Aorta (tissue), 5 donors: ENCODE measurements at regions of chr18 and their contacts with region 1.

Region 1: DNA sequence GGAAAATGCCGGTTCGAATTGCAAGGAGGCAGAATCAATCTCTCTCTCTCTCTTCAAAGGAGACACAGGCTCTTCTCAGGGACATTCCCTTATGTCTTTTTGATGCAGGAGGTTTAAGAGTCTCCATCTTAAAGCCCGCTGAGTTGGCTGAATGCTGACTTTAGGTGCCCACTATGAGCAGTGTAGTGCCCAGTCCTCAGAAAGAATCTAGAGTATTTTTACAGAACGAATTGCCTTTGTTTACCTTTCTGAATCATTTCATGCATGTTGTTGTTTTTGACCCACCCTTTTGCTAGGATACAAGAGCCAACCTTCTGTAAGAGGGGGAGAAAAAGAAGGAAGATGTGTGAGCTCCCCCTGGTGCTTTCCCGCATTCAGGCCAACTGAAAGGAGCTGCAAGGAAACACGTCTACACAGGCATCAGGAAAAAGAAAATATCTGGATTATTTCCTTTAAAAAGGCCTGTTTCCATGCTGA is 193.5 kb upstream of the TCF4 start:
- DNase-seq: peak in 1 of 2 donors; percentile 54
- ATAC-seq: peak; percentile 60
- H3K4me3 ChIP-seq: no peak overlapping the region
- H3K27ac ChIP-seq: no peak overlapping the region
- H3K4me1 ChIP-seq: peaks cover 0 to 2% of the 10 kb centered on the region in 2 donors
- H3K27me3 ChIP-seq: no peaks in the 10 kb centered on the region

Region 2: GRCh38 chr18:55415258-55415871 is 366.2 kb before region 1 on chr18:
- intact Hi-C with region 1: loop called (anchors 5 kb)
- DNase-seq: peak; percentile 90 to 97
- ATAC-seq: peak; percentile 91
- H3K4me3 ChIP-seq: no peak overlapping the region
- H3K27ac ChIP-seq: no peak overlapping the region
- H3K4me1 ChIP-seq: no peaks in the 10 kb centered on the region
- H3K27me3 ChIP-seq: no peaks in the 10 kb centered on the region

Region 3: DNA sequence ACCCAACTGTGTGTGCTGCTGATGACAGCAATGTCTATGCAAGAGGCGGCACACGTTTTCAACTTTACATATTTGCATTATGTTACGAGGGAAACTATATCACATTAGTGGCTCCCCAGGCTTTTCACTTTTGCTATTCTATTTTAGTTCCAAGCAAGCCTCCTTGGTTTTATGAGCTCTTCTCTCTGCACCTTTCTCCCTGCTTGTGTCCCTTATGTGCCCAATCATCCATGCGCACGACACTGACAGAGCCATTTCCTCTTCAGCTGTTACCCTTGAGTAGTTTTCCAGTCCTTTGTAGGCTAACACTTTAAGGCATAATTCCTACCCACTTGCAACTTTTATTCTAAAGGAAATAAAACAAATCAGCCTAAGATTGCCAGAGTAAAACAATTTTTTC is 347.9 kb before region 1 on chr18:
- intact Hi-C with region 1: no loop called
- DNase-seq: no peak
- ATAC-seq: no peak
- H3K4me3 ChIP-seq: no peak overlapping the region
- H3K27ac ChIP-seq: no peak overlapping the region
- H3K4me1 ChIP-seq: peaks cover 0 to 3% of the 10 kb centered on the region in 2 donors
- H3K27me3 ChIP-seq: no peaks in the 10 kb centered on the region